ENCODE measurements at regions of chr1 and their contacts with region 1.

Region 1: GRCh38 chr1:44377925-44378784 is 23.1 kb upstream of the ERI3 start:
- DNase-seq: peak in 1 of 2 experiments; percentile 77
- H3K4me3 ChIP-seq: no peak overlapping the region
- H3K27ac ChIP-seq: no peak overlapping the region
- H3K4me1 ChIP-seq: peaks cover 0 to 5% (median 2%) of the 10 kb centered on the region in 4 experiments; a peak in 4 of 7 replicates
- H3K27me3 ChIP-seq: no peaks in the 10 kb centered on the region
- CTCF ChIP-seq: peak; percentile 54 to 90 (median 84)
- EP300 ChIP-seq: no peak
- POLR2A ChIP-seq: no peak
- RAD21 ChIP-seq: peak; percentile 91 to 94

Region 2: DNA sequence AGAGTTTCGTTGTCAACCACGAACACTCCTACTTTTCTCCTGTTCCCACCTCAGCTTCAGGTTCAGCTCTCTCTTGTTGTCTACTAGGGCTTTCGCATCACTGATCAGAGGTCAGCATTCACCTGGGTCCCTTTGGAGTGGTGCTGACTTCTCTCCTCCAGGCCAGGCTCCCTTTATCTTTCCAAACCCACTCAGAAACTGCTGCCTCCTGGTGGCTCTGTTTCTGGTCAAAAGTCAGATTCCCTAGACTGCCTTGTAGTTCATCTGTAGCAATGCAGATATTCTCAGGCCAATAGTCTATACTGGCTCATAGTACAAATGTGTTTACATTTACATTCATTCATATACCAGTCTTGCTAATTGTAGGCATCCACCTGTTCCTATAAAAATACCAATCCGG is 16.7 kb before region 1 on chr1:
- CTCF ChIA-PET with region 1: interaction called, 35 read pairs
- POLR2A ChIA-PET with region 1: no interaction called
- DNase-seq: no peak
- H3K4me3 ChIP-seq: no peak overlapping the region
- H3K27ac ChIP-seq: no peak overlapping the region
- H3K4me1 ChIP-seq: peaks cover 0 to 5% (median 0%) of the 10 kb centered on the region in 4 experiments; a peak in 4 of 7 replicates
- H3K27me3 ChIP-seq: no peaks in the 10 kb centered on the region; a peak in 2 of 7 replicates
- CTCF ChIP-seq: peak in 2 of 3 experiments; percentile 43 to 51; a peak in 3 of 4 replicates
- EP300 ChIP-seq: no peak
- POLR2A ChIP-seq: no peak
- RAD21 ChIP-seq: peak; percentile 27 to 47; a peak in 3 of 4 replicates

Region 3: GRCh38 chr1:44423591-44424537 is 45.7 kb after region 1 on chr1:
- CTCF ChIA-PET with region 1: interaction called, 10 read pairs
- POLR2A ChIA-PET with region 1: no interaction called
- DNase-seq: no peak
- H3K4me3 ChIP-seq: no peak overlapping the region
- H3K27ac ChIP-seq: no peak overlapping the region
- H3K4me1 ChIP-seq: peaks cover 5 to 36% (median 25%) of the 10 kb centered on the region in 4 experiments
- H3K27me3 ChIP-seq: no peaks in the 10 kb centered on the region; a peak in 1 of 7 replicates
- CTCF ChIP-seq: no peak
- EP300 ChIP-seq: no peak
- POLR2A ChIP-seq: no peak
- RAD21 ChIP-seq: no peak

Region 4: GRCh38 chr1:44523593-44524591 is 145.7 kb after region 1 on chr1:
- CTCF ChIA-PET with region 1: interaction called, 10 read pairs
- POLR2A ChIA-PET with region 1: no interaction called
- DNase-seq: peak; percentile 70 to 80
- H3K4me3 ChIP-seq: peak overlapping the region; percentile 37 to 59 (median 50); a peak in 7 of 8 replicates
- H3K27ac ChIP-seq: peak overlapping the region; percentile 39
- H3K4me1 ChIP-seq: peaks cover 19 to 34% (median 23%) of the 10 kb centered on the region in 4 experiments
- H3K27me3 ChIP-seq: no peaks in the 10 kb centered on the region
- CTCF ChIP-seq: peak; percentile 11 to 28 (median 22); a peak in 2 of 4 replicates
- EP300 ChIP-seq: no peak
- POLR2A ChIP-seq: peak in 1 of 2 experiments; percentile 64; a peak in 2 of 3 replicates
- RAD21 ChIP-seq: peak; percentile 29 to 42

Region 5: GRCh38 chr1:44543064-44543744 is 165.0 kb after region 1 on chr1:
- CTCF ChIA-PET with region 1: interaction called, 47 read pairs
- POLR2A ChIA-PET with region 1: interaction called, 7 read pairs
- DNase-seq: peak; percentile 75 to 98
- H3K4me3 ChIP-seq: peak overlapping the region in 3 of 4 experiments; percentile 16 to 56 (median 26); a peak in 5 of 8 replicates
- H3K27ac ChIP-seq: peak overlapping the region; percentile 91
- H3K4me1 ChIP-seq: peaks cover 21 to 51% (median 39%) of the 10 kb centered on the region in 4 experiments
- H3K27me3 ChIP-seq: peaks cover 0 to 10% (median 2%) of the 10 kb centered on the region in 4 experiments; a peak in 2 of 7 replicates
- CTCF ChIP-seq: peak in 2 of 3 experiments; percentile 17 to 49; a peak in 2 of 4 replicates
- EP300 ChIP-seq: peak in 1 of 2 experiments; percentile 90; a peak in 1 of 3 replicates
- POLR2A ChIP-seq: peak in 1 of 2 experiments; percentile 47; a peak in 1 of 3 replicates
- RAD21 ChIP-seq: peak; percentile 61 to 66

Region 6: DNA sequence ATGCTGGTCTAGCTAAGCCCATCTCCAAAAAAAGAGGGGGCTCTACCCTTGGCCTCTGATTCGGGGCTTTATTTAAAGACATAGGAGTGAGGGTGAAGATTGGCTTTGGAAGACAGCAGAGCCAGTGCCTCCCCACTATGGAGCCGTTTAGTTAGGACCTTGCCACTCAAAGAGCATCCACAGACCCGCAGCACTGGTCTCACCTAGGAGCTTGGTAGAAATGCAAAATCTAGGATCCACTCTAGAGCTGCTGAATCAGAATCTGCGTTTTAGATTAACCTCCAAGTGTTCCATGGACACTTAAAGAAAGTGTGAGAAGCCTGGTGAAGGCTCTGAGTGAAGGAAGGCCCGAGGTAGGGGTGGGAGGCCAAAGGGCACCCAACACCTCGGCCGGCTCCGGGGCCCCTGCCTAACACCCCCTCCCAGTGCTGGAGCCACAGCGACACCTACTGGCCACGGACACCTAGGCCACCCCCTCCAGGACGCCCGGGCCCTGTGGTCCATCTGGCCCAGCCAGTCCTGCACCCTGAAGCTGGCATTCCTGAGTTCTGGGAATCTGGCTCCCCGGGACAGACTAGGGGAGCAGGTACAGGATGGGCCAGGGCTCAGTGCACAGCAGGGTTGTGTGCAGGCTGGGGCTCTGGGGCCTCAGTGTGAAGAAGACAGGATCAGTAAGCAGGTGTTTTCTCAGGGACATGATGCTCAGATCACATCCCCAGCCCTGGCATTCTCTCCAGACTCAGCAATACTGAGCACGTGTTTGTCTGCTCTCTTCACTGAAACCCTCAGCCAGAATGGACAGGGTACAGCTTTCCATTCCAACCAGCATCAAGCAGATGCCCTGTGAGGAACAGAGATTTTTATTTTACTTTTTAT is 217.0 kb after region 1 on chr1:
- CTCF ChIA-PET with region 1: interaction called, 112 read pairs
- POLR2A ChIA-PET with region 1: interaction called, 3 read pairs
- DNase-seq: peak; percentile 39 to 98
- H3K4me3 ChIP-seq: no peak overlapping the region
- H3K27ac ChIP-seq: no peak overlapping the region
- H3K4me1 ChIP-seq: peaks cover 12 to 23% (median 19%) of the 10 kb centered on the region in 4 experiments
- H3K27me3 ChIP-seq: no peaks in the 10 kb centered on the region
- CTCF ChIP-seq: peak; percentile 94 to 98 (median 96)
- EP300 ChIP-seq: no peak
- POLR2A ChIP-seq: no peak
- RAD21 ChIP-seq: peak; percentile 99

Measured in H1 (cell line).